Left ventricle myocardium superior (tissue), 1 donor: ENCODE measurements at regions of chr3 and their contacts with region 1.

Region 1: DNA sequence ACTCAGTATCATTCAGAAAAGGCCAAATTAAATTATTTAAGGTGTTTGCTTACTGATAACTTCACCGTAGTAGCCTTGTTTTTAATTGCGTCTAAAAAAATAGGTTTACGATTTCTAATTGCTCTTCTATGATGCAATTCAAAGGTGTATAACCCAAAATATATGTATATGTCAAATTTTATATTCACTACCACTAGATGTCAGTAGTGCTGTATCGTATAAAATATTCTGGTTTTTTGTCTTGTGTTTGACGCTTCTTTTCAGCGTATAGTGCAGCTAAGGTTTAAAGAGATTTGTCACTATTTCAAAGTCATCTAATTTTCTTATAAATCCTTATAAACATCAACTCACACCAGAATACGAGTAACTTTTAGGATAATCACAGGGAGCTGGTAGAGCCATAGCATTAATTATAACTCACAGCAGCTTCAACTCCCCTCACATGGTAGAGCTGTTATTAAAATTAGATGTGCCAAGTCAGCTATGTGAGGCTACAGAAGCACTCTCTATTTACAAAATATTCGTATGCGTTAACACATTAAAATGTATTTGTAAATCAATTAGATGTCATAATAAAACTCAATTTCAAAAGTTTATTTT is 3.5 kb downstream of the PFN2 start:
- DNase-seq: no peak
- ATAC-seq: no peak

Region 2: GRCh38 chr3:149990423-149990948 is 23.3 kb after region 1 on chr3:
- intact Hi-C with region 1: no loop called
- DNase-seq: no peak
- ATAC-seq: no peak

Region 3: DNA sequence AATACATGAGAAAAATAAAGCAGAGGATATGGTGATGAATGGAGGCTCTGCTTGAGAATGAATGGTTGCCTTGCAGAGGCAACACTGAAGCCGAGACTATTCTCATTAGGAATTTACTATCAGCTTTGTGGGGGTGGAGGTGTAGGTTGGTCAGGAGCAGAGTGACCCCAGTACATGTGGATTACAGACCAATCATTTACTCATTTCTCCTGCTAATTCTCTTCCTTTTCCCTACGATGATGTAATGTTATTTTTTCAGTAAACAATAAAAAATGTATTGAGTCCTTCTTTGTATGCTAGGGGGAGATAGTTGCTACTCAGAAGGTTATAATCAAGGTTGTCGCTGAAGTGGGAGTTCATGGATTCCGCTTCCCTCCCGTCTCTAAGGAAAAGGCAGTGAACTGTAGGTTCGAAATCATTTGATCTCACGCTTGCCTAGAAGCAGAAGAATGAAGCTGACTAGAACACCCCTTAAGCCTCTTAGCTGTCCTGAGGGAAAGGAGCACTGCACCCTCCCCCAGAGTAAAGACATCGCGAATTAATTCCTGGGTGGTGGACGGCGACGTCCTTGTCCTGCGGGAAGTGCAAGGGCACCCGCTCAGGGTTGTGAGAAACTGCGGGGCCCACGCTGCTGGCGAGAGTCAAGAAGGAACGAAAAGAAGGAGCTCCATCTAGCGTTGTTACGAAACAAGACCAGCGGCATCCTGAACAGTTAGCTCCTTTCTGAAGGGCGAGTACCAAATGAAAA is 216.7 kb after region 1 on chr3:
- intact Hi-C with region 1: loop called (anchors 1 kb)
- DNase-seq: peak; percentile 74
- ATAC-seq: peak; percentile 98